ENCODE measurements at regions of chr2 and their contacts with region 1.

Region 1: GRCh38 chr2:241441492-241441891 is 66.9 kb downstream of the STK25 start:
- DNase-seq: no peak
- ATAC-seq: no peak
- H3K4me3 ChIP-seq: no peak overlapping the region
- H3K27ac ChIP-seq: no peak overlapping the region
- H3K4me1 ChIP-seq: no peaks in the 10 kb centered on the region
- H3K27me3 ChIP-seq: no peaks in the 10 kb centered on the region
- CTCF ChIP-seq: no peak
- POLR2A ChIP-seq: no peak
- RAD21 ChIP-seq: no peak

Region 2: DNA sequence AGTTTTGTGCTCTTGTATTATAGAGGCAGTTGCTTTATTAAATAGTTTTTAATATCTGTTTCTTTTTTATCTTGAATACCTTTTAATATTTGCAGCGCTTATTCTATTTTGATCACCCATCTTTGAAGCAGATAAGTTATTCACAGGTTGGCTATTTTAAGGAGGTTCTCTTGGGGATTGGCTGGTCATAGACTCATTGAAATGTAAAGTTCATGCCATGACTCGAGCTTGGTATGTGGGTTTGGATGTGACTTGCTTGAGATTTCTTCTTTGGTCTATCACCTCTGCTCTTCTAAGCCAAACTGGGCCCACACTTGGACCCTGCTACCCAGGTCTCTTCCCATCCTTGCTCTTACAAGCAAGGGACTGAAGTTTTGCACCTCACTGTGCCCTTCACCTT is 51.8 kb before region 1 on chr2:
- CTCF ChIA-PET with region 1: no interaction called
- POLR2A ChIA-PET with region 1: no interaction called
- RAD21 ChIA-PET with region 1: no interaction called
- intact Hi-C with region 1: loop called (anchors 2 kb)
- DNase-seq: no peak
- ATAC-seq: no peak
- H3K4me3 ChIP-seq: no peak overlapping the region
- H3K27ac ChIP-seq: no peak overlapping the region
- H3K4me1 ChIP-seq: no peaks in the 10 kb centered on the region
- H3K27me3 ChIP-seq: no peaks in the 10 kb centered on the region
- CTCF ChIP-seq: no peak
- POLR2A ChIP-seq: no peak
- RAD21 ChIP-seq: no peak